Mammary epithelial cell (primary cell): ENCODE measurements at regions of chr21 and their contacts with region 1.

Region 1: DNA sequence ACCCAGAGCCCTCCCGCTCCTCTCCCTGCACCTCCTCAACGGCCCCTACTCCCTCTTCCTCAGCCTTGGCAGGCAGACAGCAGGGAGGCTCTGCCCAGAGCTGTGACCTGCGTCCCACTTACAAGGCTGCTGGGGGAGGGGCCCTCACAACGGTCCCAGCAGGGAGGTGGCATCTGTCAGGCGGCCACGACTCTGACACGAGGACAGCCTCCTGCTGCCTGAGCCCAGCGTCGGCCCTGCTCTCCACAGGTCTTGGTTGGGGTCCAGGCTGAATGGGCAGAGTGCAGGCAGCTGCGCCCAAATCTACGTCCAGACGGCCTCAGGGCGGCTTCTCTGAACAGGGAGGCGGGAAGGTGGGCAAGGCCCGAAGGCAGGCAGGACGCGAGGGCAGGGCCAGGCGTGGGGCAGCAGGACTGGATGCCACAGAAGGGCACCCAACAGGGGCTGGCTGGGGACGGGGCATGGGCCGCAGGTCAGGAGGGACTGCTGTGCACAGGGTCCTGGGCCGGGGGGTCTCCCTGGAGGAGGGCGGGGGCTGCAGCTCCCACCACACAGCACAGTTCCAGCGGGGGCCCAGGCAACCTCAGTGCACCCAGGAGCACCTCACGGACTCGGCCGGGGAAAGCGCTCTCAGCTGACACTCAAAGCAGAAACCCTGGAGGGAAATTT is 7.4 kb downstream of the SLC19A1 start:
- DNase-seq: no peak
- H3K4me3 ChIP-seq: no peak overlapping the region
- H3K27ac ChIP-seq: no peak overlapping the region
- H3K4me1 ChIP-seq: no peaks in the 10 kb centered on the region
- H3K27me3 ChIP-seq: no peaks in the 10 kb centered on the region
- CTCF ChIP-seq: no peak

Region 2: DNA sequence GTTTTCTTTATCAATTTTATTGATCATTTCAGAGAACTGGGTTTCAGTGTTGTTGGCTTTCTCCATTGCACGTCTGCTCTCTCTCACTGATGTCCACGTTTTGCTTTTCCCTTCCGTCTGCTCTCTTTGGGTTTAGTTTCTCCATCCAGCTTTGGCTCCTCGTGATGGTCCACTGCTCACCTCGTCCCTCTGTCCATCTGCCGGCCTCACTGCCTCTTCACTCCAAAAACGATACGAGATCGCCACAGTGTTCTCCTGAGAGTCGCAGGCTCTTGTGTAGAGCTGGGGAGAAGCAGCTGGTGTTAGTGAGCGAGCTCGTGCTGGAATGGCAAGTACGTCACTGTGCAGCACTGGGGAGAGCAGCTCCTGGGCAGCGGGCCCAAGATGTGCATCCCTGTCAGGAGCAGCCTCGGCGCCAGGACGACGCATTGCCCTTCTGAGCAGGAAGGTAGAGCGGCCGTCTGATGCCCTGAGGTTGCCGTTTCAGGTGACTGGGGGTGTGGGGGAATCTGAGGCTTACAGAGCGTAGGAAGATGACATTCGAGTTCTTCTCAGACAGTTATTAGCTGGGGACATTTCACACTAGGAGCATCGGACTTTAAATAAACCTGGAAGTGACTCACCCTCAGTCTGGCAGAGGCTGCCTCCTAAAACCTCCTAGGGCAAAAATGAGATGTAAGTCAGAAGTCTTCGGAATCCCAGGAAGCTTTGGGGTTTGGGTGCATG is 77.3 kb after region 1 on chr21:
- CTCF ChIA-PET with region 1: no interaction called
- dilution Hi-C with region 1: loop called (anchors 5 kb)
- in situ Hi-C with region 1: no loop called
- intact Hi-C with region 1: no loop called
- DNase-seq: peak; percentile 44
- H3K4me3 ChIP-seq: no peak overlapping the region
- H3K27ac ChIP-seq: no peak overlapping the region
- H3K4me1 ChIP-seq: peaks cover 6% of the 10 kb centered on the region
- H3K27me3 ChIP-seq: no peaks in the 10 kb centered on the region
- CTCF ChIP-seq: no peak